GM10248 (cell line): ENCODE measurements at regions of chr9 and their contacts with region 1.

Region 1: DNA sequence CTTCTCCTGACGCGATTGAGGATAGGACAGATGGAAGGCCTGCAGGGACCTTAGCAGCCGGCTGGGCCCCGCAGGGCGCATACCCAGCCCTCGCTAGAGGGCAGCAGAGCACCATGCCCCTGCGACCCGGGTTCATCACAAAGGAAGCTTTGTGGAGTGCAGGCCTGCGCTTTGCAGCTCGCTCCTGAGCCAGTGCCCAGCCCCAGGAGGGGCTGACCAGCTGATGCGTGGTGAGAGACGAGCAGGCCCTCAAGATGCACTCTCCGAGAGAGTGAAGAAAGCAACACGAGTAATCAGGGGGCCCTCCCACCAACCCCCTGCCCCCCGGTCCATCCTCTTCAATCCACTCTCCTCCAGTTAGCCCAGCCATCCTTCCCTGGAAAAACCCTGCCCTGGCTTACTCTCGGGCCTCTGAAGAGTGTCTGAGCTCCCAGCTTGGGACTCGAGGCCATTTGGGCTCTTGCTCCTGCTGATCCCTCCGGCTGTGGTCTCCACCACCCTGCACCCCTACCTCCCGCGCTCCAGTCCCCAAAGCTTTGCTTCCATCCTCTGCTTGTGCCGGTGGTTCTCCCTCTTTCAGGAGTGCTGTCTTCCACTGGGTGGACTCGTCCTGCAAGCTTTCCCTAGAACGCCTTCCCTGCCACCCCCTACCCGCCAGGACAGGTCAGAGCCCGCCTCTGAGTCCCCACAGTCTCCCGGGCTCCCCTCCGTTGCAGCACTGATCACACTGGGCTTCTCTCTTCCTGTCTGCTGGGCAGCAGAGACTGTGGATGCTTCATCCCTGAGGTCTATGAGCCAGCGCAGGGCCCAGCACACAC is 9.1 kb upstream of the KIF12 start:
- DNase-seq: peak; percentile 73
- CTCF ChIP-seq: peak; percentile 76

Region 2: DNA sequence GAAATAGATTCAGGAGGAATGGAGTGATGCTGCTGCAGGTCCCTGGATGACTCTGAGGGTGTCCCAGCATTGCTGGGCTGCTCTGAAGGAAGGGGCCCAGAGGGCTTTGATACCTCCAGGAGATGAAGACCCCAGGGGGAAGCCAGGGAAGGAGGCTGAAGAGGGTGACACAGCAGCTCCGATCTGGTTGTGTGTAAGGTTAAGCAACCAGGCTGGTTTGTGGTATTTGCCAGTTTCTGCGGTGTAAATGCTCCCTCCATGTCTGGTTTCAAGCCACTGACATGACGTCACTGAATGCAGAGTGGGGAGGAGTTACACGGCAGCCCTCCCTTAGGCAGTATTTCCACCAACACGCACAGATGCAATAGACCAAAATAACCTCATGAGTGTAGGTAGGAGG is 174.7 kb after region 1 on chr9:
- CTCF ChIA-PET with region 1: interaction called, 12 read pairs
- POLR2A ChIA-PET with region 1: no interaction called
- DNase-seq: no peak
- CTCF ChIP-seq: no peak